ENCODE measurements at regions of chr5 and their contacts with region 1.

Region 1: GRCh38 chr5:136674178-136674577 is 308.8 kb upstream of the TRPC7 start:
- H3K4me3 ChIP-seq: no peak overlapping the region
- H3K27ac ChIP-seq: no peak overlapping the region
- H3K4me1 ChIP-seq: no peaks in the 10 kb centered on the region
- CTCF ChIP-seq: no peak

Region 2: DNA sequence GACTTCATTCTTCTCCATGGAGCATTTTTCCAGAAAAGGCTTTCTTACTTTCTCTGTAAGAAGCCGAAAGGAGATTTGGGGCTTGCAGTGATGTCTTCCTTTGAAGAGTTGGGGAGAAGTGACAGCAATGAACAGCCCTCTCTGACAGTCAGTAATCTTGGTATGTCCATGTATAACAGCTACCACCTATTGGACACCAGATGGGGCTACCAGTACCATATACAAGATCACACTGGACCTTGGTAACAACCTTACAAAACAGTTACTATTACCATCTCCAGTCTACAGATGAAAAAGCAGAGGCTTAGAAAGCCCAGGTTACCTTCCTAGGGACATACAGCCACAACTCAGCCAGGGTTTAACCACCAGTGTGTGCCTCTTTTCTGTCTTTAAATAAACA is 36.1 kb before region 1 on chr5:
- CTCF ChIA-PET with region 1: no interaction called
- POLR2A ChIA-PET with region 1: no interaction called
- H3K4me3 ChIP-seq: no peak overlapping the region
- H3K27ac ChIP-seq: no peak overlapping the region
- H3K4me1 ChIP-seq: no peaks in the 10 kb centered on the region
- CTCF ChIP-seq: no peak

Region 3: DNA sequence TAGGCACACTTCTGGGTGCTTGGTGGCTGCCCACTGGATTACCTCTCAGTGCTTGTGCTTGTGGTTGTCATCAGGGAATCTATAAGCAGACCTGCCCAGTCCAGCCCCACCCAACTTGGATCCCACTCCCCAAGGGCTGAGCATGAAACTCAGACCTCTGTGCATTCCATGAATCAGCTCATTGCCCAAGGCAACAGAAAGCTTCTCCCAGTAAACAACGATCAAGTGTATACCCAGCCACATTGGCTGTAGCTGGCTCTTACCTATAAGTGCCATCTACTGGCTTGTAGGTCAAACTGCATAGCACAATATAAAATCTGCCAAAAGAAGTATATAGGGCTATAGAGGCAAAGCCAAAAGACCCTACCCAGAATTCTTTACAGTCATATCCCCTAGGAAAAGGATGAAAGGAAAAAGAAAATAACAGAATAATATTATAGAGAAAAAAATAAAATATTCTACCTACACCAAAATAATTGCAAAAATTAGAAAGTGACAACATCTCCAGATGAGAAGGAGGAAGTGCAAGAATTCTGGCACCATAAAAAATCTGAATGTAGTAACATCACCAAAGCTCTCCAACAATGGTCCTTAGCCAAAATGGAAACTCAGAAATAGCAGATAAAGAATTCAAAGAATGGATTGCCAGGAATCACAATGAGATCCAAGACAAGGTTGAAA is 12.2 kb after region 1 on chr5:
- CTCF ChIA-PET with region 1: interaction called, 11 read pairs
- POLR2A ChIA-PET with region 1: no interaction called
- H3K4me3 ChIP-seq: no peak overlapping the region
- H3K27ac ChIP-seq: no peak overlapping the region
- H3K4me1 ChIP-seq: peaks cover 3% of the 10 kb centered on the region; the same call in 1 of the 2 replicates
- CTCF ChIP-seq: peak; percentile 20; the same call in 1 of the 2 replicates